ENCODE measurements at regions of chr1 and their contacts with region 1.

Region 1: DNA sequence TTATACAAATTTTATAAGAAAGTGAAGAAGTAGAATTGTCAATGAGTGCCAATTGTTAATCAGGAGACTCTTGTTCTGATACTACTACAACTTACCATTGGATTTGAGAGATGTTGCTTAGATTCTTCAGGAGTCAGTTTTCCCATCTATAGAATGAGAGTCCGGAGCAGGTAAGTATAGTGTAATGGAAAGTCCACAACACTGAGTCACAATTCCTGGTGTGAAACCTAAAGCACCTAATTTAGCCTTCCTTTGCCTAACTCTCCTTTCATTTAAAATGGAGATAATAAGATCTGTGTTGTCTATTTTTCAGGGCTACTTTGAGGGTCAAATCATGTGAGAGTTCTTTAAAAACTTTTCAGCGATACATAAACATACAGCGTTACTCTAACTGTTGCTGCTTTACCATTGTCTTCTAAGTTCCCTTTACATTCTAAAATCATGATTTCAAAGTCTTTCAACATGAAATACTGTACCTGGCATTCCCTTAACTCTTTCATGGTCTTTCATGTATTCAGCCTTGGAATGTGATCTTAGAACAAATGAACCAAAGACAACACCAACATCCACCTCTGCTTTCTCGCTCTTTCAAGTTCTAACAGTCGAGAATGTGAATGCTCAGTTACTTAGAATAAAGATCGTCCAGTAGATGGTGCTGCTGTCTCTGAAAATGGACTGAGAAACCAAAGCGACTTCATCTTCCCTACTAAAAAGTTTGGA is 90.9 kb downstream of the SLC30A10 start:
- DNase-seq: peak; percentile 59
- ATAC-seq: peak; percentile 87
- H3K4me3 ChIP-seq: no peak overlapping the region
- H3K27ac ChIP-seq: no peak overlapping the region
- H3K4me1 ChIP-seq: peaks cover 9% of the 10 kb centered on the region
- H3K27me3 ChIP-seq: 0 out of 5 replicates have a peak, but pooled peaks cover 0 to 4% of the 10 kb centered on the region in 2 experiments
- CTCF ChIP-seq: peak; percentile 87
- EP300 ChIP-seq: no peak
- POLR2A ChIP-seq: no peak
- RAD21 ChIP-seq: peak; percentile 77

Region 2: DNA sequence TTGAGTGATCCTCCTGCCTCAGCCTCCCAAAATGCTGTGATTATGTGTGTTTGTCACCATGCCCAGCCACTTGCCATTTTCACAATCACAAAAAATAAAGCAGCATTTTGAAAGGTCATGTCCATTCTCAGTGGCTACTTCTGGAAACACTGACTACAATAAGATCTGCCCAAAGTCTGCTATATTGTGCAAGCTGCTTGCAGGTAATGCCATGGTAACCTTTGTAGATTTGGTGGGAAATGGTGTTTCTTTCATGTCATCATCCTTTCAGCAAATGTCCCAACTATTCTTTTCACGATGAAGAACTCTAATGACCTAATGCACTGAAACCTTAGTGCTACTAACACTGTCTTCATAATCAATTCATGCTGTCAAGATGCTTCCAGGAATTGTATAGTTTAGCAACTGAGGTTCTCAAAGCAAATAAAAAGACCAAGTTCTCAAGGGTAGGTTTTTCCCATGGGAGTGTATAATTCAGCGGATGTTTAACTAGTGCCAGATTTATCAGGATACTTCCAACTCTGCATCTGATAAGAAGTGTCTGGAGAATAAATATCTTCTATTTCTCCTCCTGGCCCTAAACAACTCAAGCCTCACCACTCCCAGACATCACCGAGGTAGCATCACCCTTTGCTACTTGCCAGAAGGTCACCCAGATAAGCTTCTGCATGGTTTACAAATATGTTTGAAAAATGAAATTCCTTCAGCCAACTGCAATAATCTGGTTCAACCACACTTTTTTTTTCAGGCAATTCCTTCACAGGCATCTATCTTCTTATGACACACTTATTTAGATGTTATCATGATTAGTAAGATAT is 92.6 kb before region 1 on chr1:
- CTCF ChIA-PET with region 1: no interaction called
- POLR2A ChIA-PET with region 1: no interaction called
- in situ Hi-C with region 1: no loop called
- intact Hi-C with region 1: no loop called
- DNase-seq: no peak
- ATAC-seq: no peak
- H3K4me3 ChIP-seq: no peak overlapping the region
- H3K27ac ChIP-seq: no peak overlapping the region
- H3K4me1 ChIP-seq: no peaks in the 10 kb centered on the region
- H3K27me3 ChIP-seq: no peaks in the 10 kb centered on the region
- CTCF ChIP-seq: no peak
- EP300 ChIP-seq: no peak
- POLR2A ChIP-seq: no peak
- RAD21 ChIP-seq: no peak

Region 3: DNA sequence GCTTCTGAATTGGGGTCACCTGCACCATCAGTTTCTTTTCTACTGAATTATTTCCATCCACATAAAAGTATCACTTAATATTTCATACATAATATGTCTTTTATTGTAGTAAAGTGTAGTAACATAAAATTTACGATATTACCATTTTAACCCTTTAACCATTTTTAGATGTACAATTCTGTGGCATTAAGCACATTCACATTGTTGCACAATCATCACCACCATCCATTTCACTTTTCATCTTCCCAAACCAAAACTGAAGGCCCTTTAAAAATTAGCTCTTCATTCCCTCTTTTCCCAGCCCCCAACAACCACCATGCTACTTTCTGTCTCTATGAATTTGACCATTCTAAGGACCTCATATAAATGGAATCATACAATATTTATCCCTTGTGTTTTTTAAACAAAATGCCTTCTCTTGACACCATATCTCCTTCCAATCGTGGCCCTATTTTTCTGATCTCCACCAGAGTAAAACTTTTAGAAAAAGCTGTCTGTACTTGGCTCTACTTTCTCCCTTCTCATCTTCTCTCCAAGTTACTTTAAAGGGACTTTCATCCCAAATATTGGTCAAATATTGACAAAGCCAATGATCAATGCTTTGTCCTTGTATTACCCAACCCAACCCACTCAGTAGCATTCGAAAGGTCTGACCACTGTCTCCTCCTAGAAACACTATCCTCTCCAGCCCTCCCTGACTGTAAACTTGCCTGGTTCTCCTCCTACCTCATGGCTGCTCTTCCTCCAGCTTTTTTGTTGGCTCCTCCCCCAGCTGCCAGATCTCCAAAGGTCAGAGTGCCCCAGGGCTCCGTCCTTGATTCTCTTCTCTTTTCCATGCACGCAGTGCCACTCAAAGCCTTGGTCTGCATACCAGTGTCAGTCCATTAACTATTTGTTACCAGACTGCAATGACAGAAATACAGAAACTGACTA is 46.2 kb after region 1 on chr1:
- CTCF ChIA-PET with region 1: no interaction called
- POLR2A ChIA-PET with region 1: interaction called, 3 read pairs
- in situ Hi-C with region 1: no loop called
- intact Hi-C with region 1: loop called (anchors 5 kb)
- DNase-seq: peak; percentile 76
- ATAC-seq: peak; percentile 100
- H3K4me3 ChIP-seq: peak overlapping the region in 2 of 3 experiments; percentile 4 to 14; a peak in 3 of 6 replicates
- H3K27ac ChIP-seq: peak overlapping the region; percentile 75
- H3K4me1 ChIP-seq: peaks cover 48% of the 10 kb centered on the region
- H3K27me3 ChIP-seq: no peaks in the 10 kb centered on the region
- CTCF ChIP-seq: no peak
- EP300 ChIP-seq: peak in 1 of 2 experiments; percentile 86; a peak in 2 of 4 replicates
- POLR2A ChIP-seq: no peak
- RAD21 ChIP-seq: 0 out of 2 replicates have a peak, but pooled peaks have one; percentile 26

Region 4: GRCh38 chr1:219927956-219928790 is 90.7 kb after region 1 on chr1 and contains the start of gene SLC30A10:
- CTCF ChIA-PET with region 1: no interaction called
- POLR2A ChIA-PET with region 1: interaction called, 5 read pairs
- in situ Hi-C with region 1: no loop called
- intact Hi-C with region 1: loop called (anchors 10 kb)
- DNase-seq: peak; percentile 4
- ATAC-seq: peak; percentile 82
- H3K4me3 ChIP-seq: peak within 1 kb of the TSS; percentile 71 to 90 (median 81)
- H3K27ac ChIP-seq: peak within 1 kb of the TSS; percentile 84
- H3K4me1 ChIP-seq: peaks cover 73% of the 10 kb centered on the region
- H3K27me3 ChIP-seq: no peaks in the 10 kb centered on the region; a peak in 1 of 5 replicates
- CTCF ChIP-seq: peak; percentile 74
- EP300 ChIP-seq: 0 out of 4 replicates have a peak, but pooled peaks of 1 of the 2 experiments have one; percentile 11
- POLR2A ChIP-seq: peak; percentile 13 to 59; a peak in 2 of 4 replicates
- RAD21 ChIP-seq: peak; percentile 41; the same call in 1 of the 2 replicates
- total RNA-seq, gene SLC30A10: 14.7 and 30.2 TPM in 2 replicates

Region 5: DNA sequence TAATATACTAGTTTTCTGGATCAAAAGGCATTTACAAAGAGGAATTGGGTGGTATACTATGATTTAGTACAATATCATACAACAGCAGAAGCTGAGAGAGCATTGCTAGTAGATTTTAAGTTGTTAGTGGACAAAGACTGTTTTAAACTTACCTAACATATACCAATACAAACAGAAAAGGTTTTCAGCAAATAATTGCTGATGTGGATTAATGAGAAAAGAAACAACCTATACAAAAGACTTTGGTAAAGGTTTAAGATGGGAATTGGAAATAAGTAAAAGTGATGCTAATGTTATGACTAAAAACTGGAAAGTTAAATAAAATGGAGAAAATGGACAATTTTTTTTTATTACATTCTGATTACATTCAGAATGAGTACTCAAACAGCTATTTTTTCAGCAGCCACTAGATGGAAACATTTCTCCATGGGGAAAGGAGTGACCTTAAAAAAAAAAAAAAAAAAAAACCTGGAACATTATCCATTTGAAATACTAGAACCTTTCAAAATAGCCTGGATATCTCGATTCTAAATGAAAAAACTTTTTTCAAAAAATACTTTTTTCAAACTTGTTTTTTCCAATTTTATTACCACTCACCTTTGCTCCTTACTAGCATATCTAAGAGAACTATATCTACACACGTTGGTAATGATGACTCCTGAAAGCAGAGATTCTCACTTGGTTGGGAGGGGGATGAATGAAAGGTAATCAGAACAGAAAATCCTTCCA is 153.5 kb after region 1 on chr1:
- CTCF ChIA-PET with region 1: no interaction called
- POLR2A ChIA-PET with region 1: no interaction called
- in situ Hi-C with region 1: no loop called
- intact Hi-C with region 1: loop called (anchors 5 kb)
- DNase-seq: peak; percentile 45
- ATAC-seq: peak; percentile 40
- H3K4me3 ChIP-seq: no peak overlapping the region
- H3K27ac ChIP-seq: no peak overlapping the region
- H3K4me1 ChIP-seq: peaks cover 22% of the 10 kb centered on the region
- H3K27me3 ChIP-seq: no peaks in the 10 kb centered on the region
- CTCF ChIP-seq: peak; percentile 32; the same call in 1 of the 2 replicates
- EP300 ChIP-seq: no peak
- POLR2A ChIP-seq: no peak
- RAD21 ChIP-seq: no peak

Region 6: DNA sequence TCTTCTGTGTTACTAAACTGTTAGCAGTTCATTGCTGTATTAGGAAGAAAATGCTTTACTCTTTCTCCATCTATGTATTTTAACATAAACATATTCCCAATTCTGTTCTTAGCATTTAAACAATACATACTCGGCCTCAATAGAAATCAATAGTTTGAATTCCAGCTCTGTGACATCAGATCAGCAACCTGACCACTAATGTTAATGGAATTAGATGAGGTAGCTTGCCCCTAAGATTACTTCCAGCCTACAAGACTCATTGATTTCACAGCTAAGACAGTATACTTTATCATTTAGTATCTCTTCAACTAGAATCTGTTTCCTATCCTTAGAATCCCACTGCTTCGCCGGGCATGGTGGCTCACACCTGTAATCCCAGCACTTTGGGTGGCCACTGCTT is 170.0 kb after region 1 on chr1:
- CTCF ChIA-PET with region 1: no interaction called
- POLR2A ChIA-PET with region 1: no interaction called
- in situ Hi-C with region 1: no loop called
- intact Hi-C with region 1: loop called (anchors 5 kb)
- DNase-seq: no peak
- ATAC-seq: no peak
- H3K4me3 ChIP-seq: no peak overlapping the region
- H3K27ac ChIP-seq: no peak overlapping the region
- H3K4me1 ChIP-seq: no peaks in the 10 kb centered on the region
- H3K27me3 ChIP-seq: no peaks in the 10 kb centered on the region
- CTCF ChIP-seq: no peak
- EP300 ChIP-seq: no peak
- POLR2A ChIP-seq: no peak
- RAD21 ChIP-seq: no peak

Region 7: GRCh38 chr1:220123889-220124288 is 286.5 kb after region 1 on chr1:
- CTCF ChIA-PET with region 1: no interaction called
- POLR2A ChIA-PET with region 1: no interaction called
- in situ Hi-C with region 1: loop called (anchors 10 kb)
- intact Hi-C with region 1: loop called (anchors 1 kb)
- DNase-seq: peak; percentile 20
- ATAC-seq: peak; percentile 67
- H3K4me3 ChIP-seq: no peak overlapping the region
- H3K27ac ChIP-seq: no peak overlapping the region
- H3K4me1 ChIP-seq: peaks cover 15% of the 10 kb centered on the region
- H3K27me3 ChIP-seq: no peaks in the 10 kb centered on the region; a peak in 1 of 5 replicates
- CTCF ChIP-seq: peak; percentile 13; the same call in 1 of the 2 replicates
- EP300 ChIP-seq: no peak
- POLR2A ChIP-seq: no peak
- RAD21 ChIP-seq: no peak

Region 8: GRCh38 chr1:220217383-220217988 is 380.1 kb after region 1 on chr1:
- CTCF ChIA-PET with region 1: no interaction called
- POLR2A ChIA-PET with region 1: no interaction called
- in situ Hi-C with region 1: no loop called
- intact Hi-C with region 1: loop called (anchors 10 kb)
- DNase-seq: peak; percentile 25
- ATAC-seq: peak; percentile 74
- H3K4me3 ChIP-seq: no peak overlapping the region
- H3K27ac ChIP-seq: no peak overlapping the region
- H3K4me1 ChIP-seq: no peaks in the 10 kb centered on the region
- H3K27me3 ChIP-seq: no peaks in the 10 kb centered on the region; a peak in 1 of 5 replicates
- CTCF ChIP-seq: peak; percentile 46
- EP300 ChIP-seq: no peak
- POLR2A ChIP-seq: no peak
- RAD21 ChIP-seq: no peak

Measured in HepG2 (cell line).